Activated naive CD4-positive, alpha-beta T cell treated with anti-CD3 and anti-CD28 coated beads for 36 hours (primary cell): ENCODE measurements at regions of chr7 and their contacts with region 1.

Region 1: DNA sequence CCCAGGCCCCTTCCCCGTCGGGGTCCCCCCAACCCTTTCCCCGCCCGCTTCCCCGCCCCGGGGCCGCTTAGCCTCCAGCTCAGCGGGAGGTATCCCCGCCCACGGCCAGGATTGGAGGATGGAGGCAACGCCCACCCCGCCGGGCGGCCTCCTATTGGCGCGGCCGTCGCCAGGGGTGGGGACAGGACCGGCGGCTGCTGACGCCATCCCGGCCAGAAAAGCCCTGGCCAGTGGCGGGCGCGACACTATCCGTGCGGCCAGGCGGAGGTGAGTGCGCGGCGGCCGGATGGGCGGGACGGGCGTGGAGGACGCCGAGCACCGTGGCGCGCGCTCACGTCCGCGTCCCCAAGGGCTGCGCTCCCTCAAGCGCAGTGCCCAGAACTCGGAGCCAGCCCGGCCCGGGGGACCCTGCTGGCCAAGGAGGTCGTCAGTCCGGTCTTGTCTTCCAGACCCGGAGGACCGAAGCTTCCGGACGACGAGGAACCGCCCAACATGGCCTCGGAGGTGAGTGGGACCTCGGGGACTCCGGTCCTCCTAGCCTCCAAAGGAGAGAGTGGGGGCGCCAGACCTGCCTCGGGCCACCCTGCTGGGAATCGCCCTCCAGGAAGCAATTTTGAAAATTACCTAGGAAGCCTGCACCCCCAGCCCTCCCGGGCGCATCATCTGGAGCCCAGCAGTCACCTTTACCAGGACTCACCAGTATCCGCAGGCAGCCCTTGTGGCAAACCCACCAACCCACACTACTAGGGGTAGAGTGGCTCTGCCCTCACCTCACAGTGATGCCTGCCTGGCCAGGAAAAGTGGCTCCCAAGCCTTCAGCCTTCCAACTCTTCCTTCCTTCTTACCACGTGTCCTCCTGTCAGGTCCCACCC is at the start of gene ASL:
- DNase-seq: peak; percentile 87
- H3K4me3 Mint-ChIP-seq: peak within 1 kb of the TSS; percentile 70
- H3K27ac Mint-ChIP-seq: no peak within 1 kb of the TSS
- H3K4me1 Mint-ChIP-seq: peaks cover 12% of the 10 kb centered on the region
- H3K27me3 Mint-ChIP-seq: no peaks in the 10 kb centered on the region
- total RNA-seq, gene ASL: 12.7 to 13.6 TPM

Region 2: DNA sequence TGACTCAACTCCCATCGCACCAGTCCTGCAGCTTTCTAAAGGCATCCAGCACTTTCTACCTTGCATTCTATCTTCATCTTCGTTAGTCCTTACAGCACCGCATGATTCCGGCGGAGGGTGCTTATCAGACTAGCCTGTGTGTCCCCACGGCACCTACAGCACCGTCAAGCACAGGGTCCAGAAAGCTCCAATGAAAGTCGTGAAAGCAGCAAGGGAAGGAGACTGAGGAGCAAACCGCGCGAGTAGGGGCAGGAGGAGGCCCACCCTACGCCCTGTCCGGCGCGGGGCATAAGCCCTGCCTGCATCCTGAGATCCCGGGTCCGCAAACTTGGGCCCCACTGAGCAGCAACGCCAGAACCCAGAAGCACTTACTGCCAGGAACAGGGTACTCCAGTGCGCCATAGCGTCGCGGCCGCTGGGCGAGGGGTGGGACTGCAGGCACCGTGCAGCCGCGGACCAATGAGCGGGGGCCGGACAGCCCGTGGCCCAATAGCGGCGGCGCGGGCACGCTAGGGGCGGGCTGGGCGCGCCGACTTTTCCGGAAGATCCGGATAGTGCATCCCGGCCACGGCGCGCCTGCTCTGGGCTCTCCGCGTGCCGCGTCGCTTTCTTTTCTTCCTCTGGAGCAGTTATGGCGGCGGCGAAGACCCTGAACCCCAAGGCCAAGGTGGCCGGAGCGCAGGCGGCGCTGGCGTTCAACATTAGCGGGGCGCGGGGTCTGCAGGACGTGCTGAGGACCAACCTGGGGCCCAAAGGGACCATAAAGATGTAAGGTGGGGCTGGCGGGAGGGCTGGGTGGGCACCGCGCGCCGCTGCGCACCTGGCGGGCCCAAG is 325.1 kb before region 1 on chr7:
- CTCF ChIA-PET with region 1: no interaction called
- intact Hi-C with region 1: loop called (anchors 1 kb)
- DNase-seq: peak; percentile 89
- H3K4me3 Mint-ChIP-seq: peak overlapping the region; percentile 84
- H3K27ac Mint-ChIP-seq: peak overlapping the region; percentile 98
- H3K4me1 Mint-ChIP-seq: peaks cover 40% of the 10 kb centered on the region
- H3K27me3 Mint-ChIP-seq: no peaks in the 10 kb centered on the region

Region 3: GRCh38 chr7:66039094-66039670 is 36.6 kb before region 1 on chr7:
- CTCF ChIA-PET with region 1: no interaction called
- intact Hi-C with region 1: no loop called
- DNase-seq: no peak
- H3K4me3 Mint-ChIP-seq: no peak overlapping the region
- H3K27ac Mint-ChIP-seq: no peak overlapping the region
- H3K4me1 Mint-ChIP-seq: peaks cover 7% of the 10 kb centered on the region
- H3K27me3 Mint-ChIP-seq: peaks cover 7% of the 10 kb centered on the region

Region 4: DNA sequence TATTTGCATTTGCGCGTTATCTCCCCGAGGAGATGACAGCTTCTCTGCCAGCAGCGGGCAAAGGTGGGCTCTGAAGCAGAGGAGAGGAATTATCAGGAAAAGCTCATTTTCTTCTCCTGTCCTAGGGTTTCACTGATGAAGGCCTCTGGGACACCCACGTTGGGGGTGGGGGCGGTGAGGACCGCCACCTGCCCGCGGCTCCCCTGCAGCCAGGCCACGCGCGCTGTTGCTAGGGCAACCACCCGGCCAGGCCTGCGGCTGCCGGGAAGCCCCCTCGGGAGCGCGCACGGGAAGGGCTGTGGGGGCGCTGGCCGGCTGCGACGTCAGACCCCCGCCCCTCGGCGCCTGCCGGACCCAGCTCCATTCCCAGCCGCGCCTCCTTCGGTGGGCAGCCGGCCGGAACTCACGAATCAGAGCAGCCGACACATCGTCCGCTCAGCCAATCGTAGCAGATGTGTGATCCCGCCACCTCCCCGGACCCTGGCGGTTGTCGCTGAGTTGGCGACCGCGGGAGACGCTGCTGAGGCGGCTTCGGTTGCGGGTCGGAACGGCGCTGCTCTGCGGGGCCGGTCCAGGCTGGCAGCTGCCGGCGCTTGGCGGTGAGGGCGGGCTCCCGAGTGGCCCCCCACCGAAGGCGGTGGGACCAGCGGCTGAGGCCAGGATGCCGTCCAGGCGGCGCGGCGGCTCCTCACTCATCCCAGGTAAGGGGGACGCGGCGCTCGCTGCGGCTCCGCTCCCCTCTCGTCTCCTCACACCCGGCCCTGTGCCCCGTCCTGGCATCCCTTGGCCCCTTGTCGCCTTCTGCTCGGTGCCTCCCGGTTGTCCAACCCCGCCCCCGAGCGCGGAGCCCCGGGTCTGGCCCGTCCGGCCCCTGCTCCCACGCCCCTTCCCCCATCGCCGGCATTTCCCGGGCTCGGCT is 129.3 kb after region 1 on chr7 and contains the start of gene TPST1:
- CTCF ChIA-PET with region 1: no interaction called
- intact Hi-C with region 1: loop called (anchors 2 kb)
- DNase-seq: peak; percentile 84
- H3K4me3 Mint-ChIP-seq: peak within 1 kb of the TSS; percentile 88
- H3K27ac Mint-ChIP-seq: no peak within 1 kb of the TSS
- H3K4me1 Mint-ChIP-seq: peaks cover 29% of the 10 kb centered on the region
- H3K27me3 Mint-ChIP-seq: peaks cover 13% of the 10 kb centered on the region
- total RNA-seq, gene TPST1: 1.9 to 3.8 TPM